ENCODE measurements at regions of chr2 and their contacts with region 1.

Region 1: GRCh38 chr2:105744091-105744908 is 412 bp upstream of the NCK2 start:
- DNase-seq: peak; percentile 52
- H3K4me3 Mint-ChIP-seq: peak overlapping the region; percentile 79
- H3K27ac Mint-ChIP-seq: peak overlapping the region; percentile 58
- H3K4me1 Mint-ChIP-seq: peaks cover 22% of the 10 kb centered on the region
- H3K27me3 Mint-ChIP-seq: no peaks in the 10 kb centered on the region
- CTCF ChIP-seq: no peak

Region 2: DNA sequence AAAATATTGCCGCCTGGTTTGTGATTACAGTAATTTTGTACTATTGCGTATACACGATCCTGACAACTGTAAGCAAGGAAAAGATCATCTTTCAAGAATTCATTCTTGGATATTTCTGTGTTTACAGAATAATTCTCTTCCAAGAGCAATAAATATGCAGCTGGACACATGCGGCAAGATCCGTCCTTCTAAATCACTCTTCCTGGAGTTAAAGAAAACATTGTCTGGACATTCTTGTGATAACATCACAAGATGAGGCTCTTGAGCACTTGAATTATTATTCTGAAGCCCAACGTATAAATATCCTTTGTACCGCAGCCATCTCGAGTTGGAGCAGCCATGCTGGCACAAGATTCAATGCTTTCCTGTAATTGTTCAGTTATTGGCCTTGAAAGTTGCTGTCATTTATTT is 355.3 kb before region 1 on chr2:
- CTCF ChIA-PET with region 1: no interaction called
- POLR2A ChIA-PET with region 1: no interaction called
- intact Hi-C with region 1: loop called (anchors 5 kb)
- DNase-seq: peak; percentile 72
- H3K4me3 Mint-ChIP-seq: no peak overlapping the region
- H3K27ac Mint-ChIP-seq: peak overlapping the region; percentile 9
- H3K4me1 Mint-ChIP-seq: peaks cover 30% of the 10 kb centered on the region
- H3K27me3 Mint-ChIP-seq: no peaks in the 10 kb centered on the region
- CTCF ChIP-seq: no peak

Region 3: DNA sequence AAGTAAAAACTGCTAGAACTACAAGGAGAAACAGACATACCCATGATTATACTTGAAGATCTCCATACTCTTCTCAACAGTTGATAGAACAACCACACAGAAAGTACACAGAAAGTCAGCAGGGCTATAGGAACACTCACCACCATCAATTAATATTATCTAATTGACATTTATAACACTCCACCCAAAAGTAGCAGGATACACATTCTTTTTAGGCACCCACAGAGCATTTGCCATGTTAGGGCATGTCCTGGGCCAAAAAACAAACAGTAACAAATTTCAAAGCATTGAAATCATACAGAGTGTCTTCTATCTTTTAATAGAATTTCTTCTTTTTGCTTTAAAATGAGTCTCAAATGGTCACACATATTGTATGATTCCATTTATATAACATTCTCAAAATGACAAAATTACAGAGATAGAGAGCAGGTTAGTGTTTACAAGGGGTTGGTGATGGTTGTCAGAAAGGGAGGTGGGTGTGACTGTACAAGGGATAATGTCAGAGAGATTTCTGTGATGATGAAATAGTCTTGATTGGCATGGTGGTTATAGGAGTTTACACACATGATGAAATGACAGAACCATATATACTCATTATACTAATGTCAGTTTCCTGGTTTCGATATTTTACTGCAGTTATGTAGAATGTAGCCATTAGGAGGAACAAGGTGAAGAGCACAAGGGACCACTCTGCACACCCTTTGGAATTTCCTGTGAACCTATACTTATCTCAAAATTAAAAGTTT is 83.2 kb after region 1 on chr2:
- CTCF ChIA-PET with region 1: no interaction called
- POLR2A ChIA-PET with region 1: no interaction called
- intact Hi-C with region 1: no loop called
- DNase-seq: peak; percentile 60
- H3K4me3 Mint-ChIP-seq: peak overlapping the region; percentile 31
- H3K27ac Mint-ChIP-seq: peak overlapping the region; percentile 83
- H3K4me1 Mint-ChIP-seq: peaks cover 13% of the 10 kb centered on the region
- H3K27me3 Mint-ChIP-seq: no peaks in the 10 kb centered on the region
- CTCF ChIP-seq: no peak

Measured in MCF 10A (cell line).